T-cell (primary cell): ENCODE measurements at regions of chr3 and their contacts with region 1.

Region 1: GRCh38 chr3:102449341-102449740 is 14.5 kb downstream of the ZPLD1 start:
- DNase-seq: no peak
- ATAC-seq: no peak
- H3K4me3 ChIP-seq: no peak overlapping the region
- H3K4me3 Mint-ChIP-seq: no peak overlapping the region
- H3K27ac ChIP-seq: no peak overlapping the region
- H3K27ac Mint-ChIP-seq: no peak overlapping the region
- H3K4me1 ChIP-seq: no peaks in the 10 kb centered on the region
- H3K4me1 Mint-ChIP-seq: no peaks in the 10 kb centered on the region
- H3K27me3 ChIP-seq: peaks cover 0 to 3% of the 10 kb centered on the region in 2 experiments
- H3K27me3 Mint-ChIP-seq: peaks cover 2 to 11% of the 10 kb centered on the region in 2 donors

Region 2: DNA sequence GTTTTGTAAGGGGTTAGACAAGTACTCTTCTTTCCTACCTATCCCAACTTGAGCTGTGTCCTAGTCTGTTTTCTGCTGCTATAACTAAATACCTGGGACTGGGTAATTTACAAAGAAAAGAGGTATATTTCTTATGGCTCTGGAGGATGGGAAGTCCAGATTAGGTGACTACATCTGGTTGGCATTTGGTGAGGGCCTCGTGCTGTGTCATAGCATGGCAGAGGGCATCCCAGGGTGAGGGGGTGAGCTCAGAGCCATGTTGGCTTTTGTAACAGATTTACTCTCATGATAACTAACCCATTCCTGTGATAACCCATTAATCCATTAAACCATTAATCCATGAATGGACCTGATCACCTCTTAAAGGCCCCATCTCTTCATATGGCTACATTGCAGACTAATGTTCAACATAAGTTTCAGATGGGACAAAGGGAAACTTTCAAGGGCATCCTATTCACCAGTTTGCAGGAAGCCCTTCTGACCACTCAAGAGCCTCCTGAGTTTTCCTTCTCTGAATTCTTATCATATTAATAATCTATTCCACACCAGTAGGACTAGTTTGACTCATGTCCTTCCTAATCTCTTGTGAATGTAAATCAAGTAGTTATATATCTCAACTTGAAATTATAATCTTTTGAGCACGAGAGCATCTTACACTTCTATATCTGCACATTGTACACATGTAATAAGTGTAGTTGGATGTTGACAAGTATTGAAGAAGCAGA is 200.2 kb before region 1 on chr3:
- CTCF ChIA-PET with region 1: interaction called in 1 of 2 experiments, 11 read pairs
- POLR2A ChIA-PET with region 1: no interaction called
- DNase-seq: no peak
- ATAC-seq: no peak
- H3K4me3 ChIP-seq: no peak overlapping the region
- H3K4me3 Mint-ChIP-seq: no peak overlapping the region
- H3K27ac ChIP-seq: no peak overlapping the region
- H3K27ac Mint-ChIP-seq: no peak overlapping the region
- H3K4me1 ChIP-seq: no peaks in the 10 kb centered on the region
- H3K4me1 Mint-ChIP-seq: no peaks in the 10 kb centered on the region
- H3K27me3 ChIP-seq: no peaks in the 10 kb centered on the region
- H3K27me3 Mint-ChIP-seq: peaks cover 8 to 15% of the 10 kb centered on the region in 2 donors

Region 3: DNA sequence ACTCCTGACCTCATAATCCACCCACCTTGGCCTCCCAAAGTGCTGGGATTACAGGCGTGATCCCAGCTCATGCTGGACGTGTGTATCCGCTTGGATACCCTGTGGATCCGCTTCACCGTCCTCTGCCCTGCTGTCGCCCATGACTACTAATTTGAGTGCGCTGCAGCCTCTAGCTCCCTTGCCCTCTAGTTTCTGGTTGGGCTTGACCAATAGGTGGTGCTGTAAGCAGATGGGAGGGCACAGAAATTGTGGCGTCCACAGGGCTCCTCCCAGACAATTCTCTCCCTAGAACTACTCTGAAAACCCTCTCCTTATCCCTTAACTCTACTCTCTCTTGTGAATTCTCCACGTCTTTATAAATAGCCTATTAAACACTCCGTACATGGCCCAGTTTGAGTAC is 21.7 kb after region 1 on chr3:
- CTCF ChIA-PET with region 1: no interaction called
- POLR2A ChIA-PET with region 1: no interaction called
- DNase-seq: no peak
- ATAC-seq: no peak
- H3K4me3 ChIP-seq: no peak overlapping the region
- H3K4me3 Mint-ChIP-seq: no peak overlapping the region
- H3K27ac ChIP-seq: no peak overlapping the region
- H3K27ac Mint-ChIP-seq: no peak overlapping the region
- H3K4me1 ChIP-seq: no peaks in the 10 kb centered on the region
- H3K4me1 Mint-ChIP-seq: no peaks in the 10 kb centered on the region
- H3K27me3 ChIP-seq: no peaks in the 10 kb centered on the region
- H3K27me3 Mint-ChIP-seq: peaks cover 6 to 8% of the 10 kb centered on the region in 2 donors